AG04450 (cell line): ENCODE measurements at regions of chr6 and their contacts with region 1.

Region 1: DNA sequence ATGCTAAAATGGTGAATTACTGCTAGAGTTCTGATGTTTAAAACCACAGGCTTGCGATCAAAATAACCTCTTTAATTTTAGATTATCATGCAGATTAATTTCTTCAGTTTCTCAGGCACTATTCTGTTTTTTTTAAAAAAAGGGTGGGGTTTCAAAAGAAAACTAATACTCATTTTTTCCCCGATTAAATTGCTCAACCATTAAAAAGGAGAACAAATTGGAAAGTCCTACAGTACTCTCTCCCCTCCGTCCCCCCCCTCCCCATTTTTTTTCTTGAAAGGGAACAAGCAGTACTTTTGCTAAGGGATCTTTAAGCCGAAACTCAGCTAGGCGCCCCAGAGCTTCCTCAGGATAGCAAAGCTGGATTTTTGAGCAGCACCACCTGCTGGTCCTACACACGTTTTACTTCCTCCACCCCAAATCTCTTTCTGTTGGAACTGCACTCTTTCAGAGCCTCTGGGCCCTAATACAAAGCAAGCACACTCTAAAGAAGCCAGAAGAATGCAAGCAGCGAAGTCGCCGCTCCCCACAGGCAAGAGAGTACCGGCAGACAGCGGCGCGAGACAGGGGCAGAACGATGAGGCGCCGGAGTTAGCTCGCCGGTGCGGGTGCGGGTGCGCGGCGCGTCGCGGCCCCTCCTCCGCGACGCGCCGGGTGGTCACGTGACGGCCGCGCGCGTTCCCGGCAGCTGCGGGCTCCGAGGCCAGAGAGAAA is at the start of gene RNF146:
- DNase-seq: peak; percentile 34
- H3K4me3 ChIP-seq: peak within 1 kb of the TSS; percentile 87
- H3K27ac ChIP-seq: peak within 1 kb of the TSS; percentile 95
- H3K27me3 ChIP-seq: no peaks in the 10 kb centered on the region
- CTCF ChIP-seq: peak; percentile 75
- polyA plus RNA-seq, gene RNF146: 50.5 and 64.1 TPM in 2 replicates

Region 2: DNA sequence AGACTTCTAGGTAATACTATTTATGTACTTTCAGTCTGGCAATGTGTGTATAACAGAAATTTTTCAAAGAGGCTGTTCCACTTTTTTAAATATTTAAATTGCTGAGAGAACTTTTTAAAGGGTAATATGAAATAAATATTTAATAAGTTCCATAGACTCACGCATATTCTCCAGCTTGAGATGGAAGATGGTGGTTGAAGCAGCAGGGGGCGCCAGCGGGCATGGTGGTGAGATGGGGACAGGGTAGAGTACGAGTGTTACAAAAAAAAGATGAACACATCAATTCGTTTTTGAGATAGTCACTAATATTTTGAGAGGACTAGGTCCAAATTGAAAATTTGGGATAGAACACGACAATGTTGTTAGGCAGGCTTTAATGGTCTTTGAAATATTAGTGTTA is 79.4 kb before region 1 on chr6:
- CTCF ChIA-PET with region 1: interaction called, 13 read pairs
- POLR2A ChIA-PET with region 1: interaction called, 3 read pairs
- DNase-seq: no peak
- H3K4me3 ChIP-seq: no peak overlapping the region
- H3K27ac ChIP-seq: no peak overlapping the region
- H3K27me3 ChIP-seq: no peaks in the 10 kb centered on the region
- CTCF ChIP-seq: peak; percentile 50

Region 3: GRCh38 chr6:127201321-127201720 is 65.0 kb before region 1 on chr6:
- CTCF ChIA-PET with region 1: interaction called, 4 read pairs
- POLR2A ChIA-PET with region 1: interaction called, 13 read pairs
- DNase-seq: peak; percentile 21
- H3K4me3 ChIP-seq: no peak overlapping the region
- H3K27ac ChIP-seq: no peak overlapping the region
- H3K27me3 ChIP-seq: no peaks in the 10 kb centered on the region
- CTCF ChIP-seq: no peak

Region 4: GRCh38 chr6:127279815-127280214 is 13.5 kb after region 1 on chr6:
- CTCF ChIA-PET with region 1: interaction called, 15 read pairs
- POLR2A ChIA-PET with region 1: no interaction called
- DNase-seq: no peak
- H3K4me3 ChIP-seq: no peak overlapping the region
- H3K27ac ChIP-seq: no peak overlapping the region
- H3K27me3 ChIP-seq: no peaks in the 10 kb centered on the region
- CTCF ChIP-seq: no peak